ENCODE measurements at regions of chr10 and their contacts with region 1.

Region 1: DNA sequence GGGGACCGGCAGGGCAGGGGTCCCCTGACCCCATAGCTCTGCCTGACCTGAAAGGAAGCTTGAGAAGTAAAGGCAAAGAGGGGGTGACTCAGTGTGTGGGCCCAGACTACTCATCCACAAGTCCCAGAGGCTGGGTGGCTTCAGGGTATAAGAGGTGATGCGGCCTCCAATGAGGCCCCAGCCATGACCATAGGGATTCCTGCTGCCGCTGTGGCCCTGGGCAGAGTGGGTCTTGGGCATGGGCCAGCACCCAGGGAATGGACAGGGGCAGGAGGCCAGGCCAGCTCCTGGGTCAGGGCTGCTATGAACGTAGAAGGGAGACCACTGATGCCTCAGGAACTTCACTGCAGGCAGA is 64.4 kb upstream of the EBF3 start:
- DNase-seq: no peak
- ATAC-seq: 0 out of 2 replicates have a peak, but pooled peaks have one; percentile 28
- H3K4me3 ChIP-seq: no peak overlapping the region
- H3K27ac ChIP-seq: no peak overlapping the region
- H3K4me1 ChIP-seq: no peaks in the 10 kb centered on the region
- H3K27me3 ChIP-seq: no peaks in the 10 kb centered on the region
- CTCF ChIP-seq: no peak

Region 2: DNA sequence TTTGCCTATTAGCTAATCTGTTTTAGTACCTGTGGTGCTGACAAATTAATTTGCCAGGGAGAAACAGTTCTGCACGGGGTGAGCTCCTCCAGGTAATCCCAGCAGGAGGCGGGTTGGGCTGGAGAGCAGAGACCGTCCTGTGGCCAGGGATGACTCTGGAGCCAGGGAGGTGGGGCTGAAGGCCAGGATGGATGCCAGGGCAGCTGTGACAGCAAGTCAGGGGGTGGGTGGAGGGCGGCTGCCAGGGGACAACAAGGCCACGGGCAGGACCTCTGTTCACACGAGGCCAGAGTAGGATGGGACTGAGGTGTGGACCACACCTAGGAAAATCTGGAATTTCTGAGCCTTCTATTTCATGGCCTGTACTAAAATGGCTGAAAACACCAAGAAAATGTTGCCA is 33.3 kb after region 1 on chr10:
- CTCF ChIA-PET with region 1: interaction called, 14 read pairs
- POLR2A ChIA-PET with region 1: no interaction called
- in situ Hi-C with region 1: no loop called
- intact Hi-C with region 1: no loop called
- DNase-seq: no peak
- ATAC-seq: no peak
- H3K4me3 ChIP-seq: no peak overlapping the region
- H3K27ac ChIP-seq: no peak overlapping the region
- H3K4me1 ChIP-seq: no peaks in the 10 kb centered on the region
- H3K27me3 ChIP-seq: peaks cover 2% of the 10 kb centered on the region; the same call in 1 of the 2 replicates
- CTCF ChIP-seq: no peak